ENCODE measurements at regions of chr12 and their contacts with region 1.

Region 1: GRCh38 chr12:54337280-54337842 is 12.4 kb downstream of the COPZ1 start:
- DNase-seq: no peak
- H3K4me3 ChIP-seq: no peak overlapping the region
- H3K27ac ChIP-seq: no peak overlapping the region; a peak in 1 of 4 replicates
- H3K4me1 ChIP-seq: peaks cover 0 to 5% of the 10 kb centered on the region in 2 experiments; a peak in 1 of 4 replicates
- H3K27me3 ChIP-seq: no peaks in the 10 kb centered on the region
- CTCF ChIP-seq: no peak
- EP300 ChIP-seq: peak in 1 of 2 experiments; percentile 22; a peak in 1 of 4 replicates
- RAD21 ChIP-seq: peak; percentile 65

Region 2: DNA sequence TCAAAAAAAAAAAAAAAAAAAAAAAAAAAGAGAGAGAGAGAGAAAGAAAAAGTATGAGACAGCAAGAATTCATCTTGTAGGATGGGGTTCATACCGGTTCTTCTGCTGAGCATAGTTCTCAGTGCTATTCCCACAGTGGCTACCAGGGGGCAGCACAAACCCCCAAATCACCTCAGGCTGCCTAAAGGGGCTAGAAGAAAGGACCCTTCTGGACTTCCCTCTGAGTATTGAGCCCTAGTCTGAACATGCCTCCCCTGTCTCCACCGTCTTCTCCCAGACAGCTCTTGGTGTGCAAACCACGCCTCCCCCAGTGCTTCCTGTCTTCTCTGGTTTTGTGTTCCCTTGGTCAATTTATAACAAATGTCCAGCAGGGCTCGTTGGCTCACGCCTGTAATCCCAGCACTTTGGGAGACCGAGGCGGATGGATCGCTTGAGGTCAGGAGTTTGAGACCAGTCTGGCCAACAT is 117.2 kb before region 1 on chr12:
- CTCF ChIA-PET with region 1: interaction called, 23 read pairs
- POLR2A ChIA-PET with region 1: no interaction called
- DNase-seq: peak; percentile 75
- H3K4me3 ChIP-seq: no peak overlapping the region; a peak in 1 of 4 replicates
- H3K27ac ChIP-seq: no peak overlapping the region
- H3K4me1 ChIP-seq: peaks cover 3 to 14% of the 10 kb centered on the region in 2 experiments; a peak in 3 of 4 replicates
- H3K27me3 ChIP-seq: no peaks in the 10 kb centered on the region
- CTCF ChIP-seq: peak; percentile 88
- EP300 ChIP-seq: no peak
- RAD21 ChIP-seq: peak; percentile 84

Region 3: GRCh38 chr12:54294152-54294952 is 43.0 kb before region 1 on chr12:
- CTCF ChIA-PET with region 1: interaction called, 22 read pairs
- POLR2A ChIA-PET with region 1: interaction called, 3 read pairs
- DNase-seq: peak; percentile 71
- H3K4me3 ChIP-seq: peak overlapping the region in 1 of 2 experiments; percentile 40; a peak in 1 of 4 replicates
- H3K27ac ChIP-seq: no peak overlapping the region
- H3K4me1 ChIP-seq: peaks cover 0 to 2% of the 10 kb centered on the region in 2 experiments; a peak in 1 of 4 replicates
- H3K27me3 ChIP-seq: no peaks in the 10 kb centered on the region
- CTCF ChIP-seq: peak; percentile 76
- EP300 ChIP-seq: no peak
- RAD21 ChIP-seq: peak; percentile 61

Region 4: GRCh38 chr12:54306925-54307741 is 30.2 kb before region 1 on chr12:
- CTCF ChIA-PET with region 1: interaction called, 18 read pairs
- POLR2A ChIA-PET with region 1: no interaction called
- DNase-seq: peak; percentile 59
- H3K4me3 ChIP-seq: no peak overlapping the region
- H3K27ac ChIP-seq: no peak overlapping the region
- H3K4me1 ChIP-seq: peaks cover 0 to 7% of the 10 kb centered on the region in 2 experiments; a peak in 1 of 4 replicates
- H3K27me3 ChIP-seq: no peaks in the 10 kb centered on the region; the same call in 1 of the 2 replicates
- CTCF ChIP-seq: no peak
- EP300 ChIP-seq: no peak
- RAD21 ChIP-seq: no peak

Region 5: DNA sequence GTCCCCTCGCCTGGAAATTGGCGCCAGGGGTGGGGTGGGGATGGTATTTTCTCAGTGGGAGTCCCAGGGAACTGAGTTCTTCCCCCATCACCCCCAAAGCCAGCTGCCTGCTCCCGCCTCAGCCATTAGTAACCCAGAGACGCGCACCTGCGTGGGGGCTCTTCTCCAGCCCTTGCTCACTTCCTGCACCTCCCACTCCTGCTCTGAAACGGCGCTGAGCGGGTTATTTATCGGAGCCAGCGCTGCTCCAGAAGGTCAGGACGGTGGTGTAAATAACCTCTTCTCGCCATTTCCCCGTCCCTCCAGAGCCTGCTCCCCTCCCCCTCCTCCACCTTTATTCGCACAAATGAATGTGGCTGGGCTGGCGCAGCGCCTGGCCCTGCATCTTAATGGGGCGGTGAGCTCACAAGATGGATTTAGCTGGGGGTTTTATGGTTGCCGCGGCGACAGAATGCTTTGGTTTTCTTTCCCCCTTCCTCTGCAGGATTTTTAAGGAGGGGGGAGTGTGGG is 14.7 kb after region 1 on chr12:
- CTCF ChIA-PET with region 1: interaction called, 266 read pairs
- POLR2A ChIA-PET with region 1: interaction called, 7 read pairs
- DNase-seq: peak; percentile 65
- H3K4me3 ChIP-seq: peak overlapping the region in 1 of 2 experiments; percentile 25; a peak in 2 of 4 replicates
- H3K27ac ChIP-seq: peak overlapping the region; percentile 63 to 99
- H3K4me1 ChIP-seq: peaks cover 25 to 41% of the 10 kb centered on the region in 2 experiments
- H3K27me3 ChIP-seq: no peaks in the 10 kb centered on the region
- CTCF ChIP-seq: no peak
- EP300 ChIP-seq: peak in 1 of 2 experiments; percentile 14; a peak in 1 of 4 replicates
- RAD21 ChIP-seq: no peak

Region 6: GRCh38 chr12:54368709-54369583 is 31.6 kb after region 1 on chr12:
- CTCF ChIA-PET with region 1: interaction called, 266 read pairs
- POLR2A ChIA-PET with region 1: interaction called, 3 read pairs
- DNase-seq: peak; percentile 77
- H3K4me3 ChIP-seq: no peak overlapping the region
- H3K27ac ChIP-seq: no peak overlapping the region
- H3K4me1 ChIP-seq: peaks cover 11 to 26% of the 10 kb centered on the region in 2 experiments; a peak in 2 of 4 replicates
- H3K27me3 ChIP-seq: no peaks in the 10 kb centered on the region
- CTCF ChIP-seq: peak; percentile 84
- EP300 ChIP-seq: no peak
- RAD21 ChIP-seq: peak; percentile 90

Region 7: DNA sequence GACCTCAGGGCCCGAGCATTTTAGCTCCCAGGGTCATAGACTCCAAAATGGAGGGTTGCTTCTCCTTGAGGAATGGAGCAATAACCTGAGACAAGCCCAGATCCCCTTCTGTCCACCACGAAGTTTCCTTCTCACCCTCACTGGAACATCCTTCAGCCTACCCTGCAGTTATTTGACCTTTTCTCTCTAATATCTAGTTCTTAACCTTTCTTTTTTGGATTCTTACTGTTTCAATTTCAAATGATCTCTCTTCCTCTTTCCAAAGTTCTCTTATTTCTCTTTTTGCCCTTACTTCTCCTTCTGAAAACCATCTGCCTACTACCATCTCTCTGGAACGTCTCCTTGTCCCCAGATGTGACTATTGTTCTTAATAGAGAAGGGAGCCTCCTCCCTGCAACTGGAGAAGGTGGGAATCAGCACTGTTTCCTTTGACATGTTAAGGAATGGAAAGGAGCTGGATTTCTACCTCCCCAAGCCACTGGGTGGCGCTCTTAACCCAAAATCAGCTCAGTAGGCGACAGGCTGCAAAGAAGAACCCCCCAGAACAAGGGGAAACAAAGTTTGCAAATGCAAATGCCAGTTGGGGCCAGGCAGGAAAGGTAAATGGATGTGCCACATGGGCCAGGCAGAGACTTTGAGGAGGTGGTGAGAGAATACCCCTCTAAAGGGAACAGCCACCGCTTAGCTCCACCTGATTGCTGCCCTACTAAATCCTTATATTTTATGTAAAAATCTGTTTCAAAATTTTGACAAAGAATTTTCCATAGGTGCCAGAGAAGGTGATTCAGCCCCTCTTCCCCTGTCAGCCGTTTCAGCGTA is 189.7 kb after region 1 on chr12:
- CTCF ChIA-PET with region 1: no interaction called
- POLR2A ChIA-PET with region 1: no interaction called
- DNase-seq: no peak
- H3K4me3 ChIP-seq: peak overlapping the region in 1 of 2 experiments; percentile 29; a peak in 1 of 4 replicates
- H3K27ac ChIP-seq: no peak overlapping the region
- H3K4me1 ChIP-seq: no peaks in the 10 kb centered on the region
- H3K27me3 ChIP-seq: peaks cover 70% of the 10 kb centered on the region
- CTCF ChIP-seq: peak; percentile 59
- EP300 ChIP-seq: no peak
- RAD21 ChIP-seq: peak; percentile 31; the same call in 1 of the 2 replicates

Measured in SK-N-SH (cell line).